ENCODE measurements at regions of chr15 and their contacts with region 1.

Region 1: GRCh38 chr15:40564591-40565332 is at the start of gene CCDC32:
- DNase-seq: peak; percentile 98
- H3K4me3 ChIP-seq: peak within 1 kb of the TSS; percentile 92
- H3K27ac ChIP-seq: peak within 1 kb of the TSS; percentile 29
- H3K4me1 ChIP-seq: peaks cover 41% of the 10 kb centered on the region
- CTCF ChIP-seq: no peak
- total RNA-seq, gene CCDC32: 10.3 and 15.1 TPM in 2 replicates

Region 2: GRCh38 chr15:40554164-40554530 is 10.6 kb before region 1 on chr15:
- CTCF ChIA-PET with region 1: interaction called, 3 read pairs
- POLR2A ChIA-PET with region 1: interaction called, 22 read pairs
- intact Hi-C with region 1: no loop called
- DNase-seq: no peak
- H3K4me3 ChIP-seq: no peak overlapping the region
- H3K27ac ChIP-seq: peak overlapping the region; percentile 17
- H3K4me1 ChIP-seq: peaks cover 35% of the 10 kb centered on the region
- CTCF ChIP-seq: no peak

Region 3: GRCh38 chr15:40593588-40594428 is 29.0 kb after region 1 on chr15 and contains the start of gene KNL1:
- CTCF ChIA-PET with region 1: interaction called, 6 read pairs
- POLR2A ChIA-PET with region 1: interaction called, 12 read pairs
- intact Hi-C with region 1: loop called (anchors 2 kb)
- DNase-seq: peak; percentile 95
- H3K4me3 ChIP-seq: peak within 1 kb of the TSS; percentile 85
- H3K27ac ChIP-seq: peak within 1 kb of the TSS; percentile 90
- H3K4me1 ChIP-seq: peaks cover 49% of the 10 kb centered on the region
- CTCF ChIP-seq: no peak
- total RNA-seq, gene KNL1: 51.3 and 66.9 TPM in 2 replicates